HEK293 (cell line): ENCODE measurements at regions of chr1 and their contacts with region 1.

Region 1: GRCh38 chr1:156583821-156584622 is 4.5 kb downstream of the TTC24 start:
- H3K4me3 ChIP-seq: no peak overlapping the region
- H3K27ac ChIP-seq: no peak overlapping the region
- H3K4me1 ChIP-seq: no peaks in the 10 kb centered on the region
- CTCF ChIP-seq: peak; percentile 69

Region 2: GRCh38 chr1:156608036-156608674 is 24.1 kb after region 1 on chr1:
- CTCF ChIA-PET with region 1: interaction called, 18 read pairs
- POLR2A ChIA-PET with region 1: no interaction called
- H3K4me3 ChIP-seq: no peak overlapping the region
- H3K27ac ChIP-seq: no peak overlapping the region
- H3K4me1 ChIP-seq: no peaks in the 10 kb centered on the region
- CTCF ChIP-seq: peak; percentile 85